Activated T-helper 1 cell treated with anti-CD3 and anti-CD28 coated beads, Interleukin-12 subunit alpha, Interleukin-12 subunit beta, Interleukin-2, Interleukin-4 antibody, amounts not matched to agents 30 ng/mL and 10 ng/mL and 1 ng/mL, durations not matched to agents 14 hours and 24 hours and 36 hours (primary cell): ENCODE measurements at regions of chr11 and their contacts with region 1.

Region 1: GRCh38 chr11:119057000-119057769 is at the start of gene HYOU1:
- DNase-seq: peak; percentile 98
- H3K4me3 Mint-ChIP-seq: peak within 1 kb of the TSS; percentile 97
- H3K27ac Mint-ChIP-seq: peak within 1 kb of the TSS; percentile 99
- H3K4me1 Mint-ChIP-seq: peaks cover 48% of the 10 kb centered on the region
- H3K27me3 Mint-ChIP-seq: no peaks in the 10 kb centered on the region
- total RNA-seq, gene HYOU1: 216 and 219 TPM in 2 replicates

Region 2: DNA sequence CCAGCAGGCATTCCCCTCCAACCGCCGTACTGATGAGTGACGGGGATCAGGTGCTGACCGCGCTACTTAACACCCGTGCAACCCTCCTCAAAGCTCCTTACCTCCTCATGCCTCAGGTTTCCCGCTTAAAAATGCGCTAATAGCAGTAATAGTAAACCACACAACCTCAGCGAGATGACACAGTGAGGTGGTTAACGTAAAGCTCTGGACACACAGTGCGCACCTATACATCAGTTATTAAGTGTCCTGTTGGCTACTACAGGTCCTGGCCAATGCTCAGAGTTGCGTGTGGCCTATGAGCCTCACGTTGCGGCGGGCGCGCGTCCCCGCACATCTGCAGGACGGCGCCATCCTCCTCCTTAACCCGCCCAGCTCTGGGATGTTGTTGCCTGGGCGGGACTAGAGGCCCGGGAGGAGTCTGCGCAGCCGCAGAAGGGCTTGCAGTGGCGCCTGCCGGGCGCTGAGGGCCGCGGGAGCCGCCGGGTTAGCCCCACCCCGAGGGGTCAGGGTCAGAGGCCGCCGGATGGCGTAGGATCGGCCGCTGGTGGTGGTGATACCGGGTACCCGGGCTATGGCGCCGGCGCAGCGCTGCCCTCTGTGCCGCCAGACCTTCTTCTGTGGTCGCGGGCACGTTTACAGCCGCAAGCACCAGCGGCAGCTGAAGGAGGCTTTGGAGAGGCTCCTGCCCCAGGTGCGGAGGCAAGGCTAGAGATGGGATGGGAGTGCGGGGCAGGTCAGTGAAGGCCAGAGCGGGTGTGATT is 59.4 kb before region 1 on chr11 and contains the start of gene CENATAC:
- intact Hi-C with region 1: loop called (anchors 1 kb)
- DNase-seq: peak; percentile 96
- H3K4me3 Mint-ChIP-seq: peak within 1 kb of the TSS; percentile 96
- H3K27ac Mint-ChIP-seq: peak within 1 kb of the TSS; percentile 97
- H3K4me1 Mint-ChIP-seq: peaks cover 27% of the 10 kb centered on the region
- H3K27me3 Mint-ChIP-seq: no peaks in the 10 kb centered on the region
- total RNA-seq, gene CENATAC: 50.1 and 53.6 TPM in 2 replicates

Region 3: DNA sequence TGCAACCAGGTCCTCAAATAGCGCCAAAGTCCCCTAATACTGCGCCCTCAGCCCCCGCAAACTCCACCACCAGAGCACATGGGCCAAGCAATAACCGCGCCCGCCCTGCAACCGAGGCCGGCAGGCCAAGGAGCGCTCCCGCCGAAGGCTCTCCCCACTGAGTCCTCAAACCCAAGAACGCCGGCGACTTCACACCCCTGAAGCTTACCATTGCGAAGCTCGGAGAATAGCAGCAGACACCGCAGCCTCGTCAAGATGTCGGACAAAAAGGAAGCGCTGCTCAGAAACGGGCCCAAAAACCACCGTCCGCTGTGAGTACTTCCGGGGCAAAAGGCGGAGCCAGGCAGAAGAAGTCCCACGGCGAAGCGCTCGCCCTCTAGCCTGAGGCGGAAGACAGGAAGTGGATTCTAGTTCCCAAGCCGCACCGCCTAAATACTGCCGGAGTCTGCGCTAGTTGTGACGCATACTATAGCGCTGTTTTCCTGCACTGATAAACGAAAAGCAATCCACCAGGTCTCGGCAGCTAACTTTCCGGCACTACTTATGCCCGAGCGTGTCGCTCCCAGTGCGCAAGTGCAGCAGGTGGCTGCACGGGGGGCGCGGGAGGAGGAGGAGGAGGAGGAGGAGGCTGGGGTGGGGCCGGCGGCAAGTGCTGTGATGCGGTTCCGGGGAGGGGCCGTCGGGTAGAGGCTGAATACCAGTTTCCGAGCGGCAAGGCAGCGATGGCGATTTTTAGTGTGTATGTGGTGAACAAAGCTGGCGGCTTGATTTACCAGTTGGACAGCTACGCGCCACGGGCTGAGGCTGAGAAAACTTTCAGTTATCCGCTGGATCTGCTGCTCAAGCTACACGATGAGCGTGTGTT is 38.9 kb before region 1 on chr11 and contains the starts of genes RPS25 and TRAPPC4:
- intact Hi-C with region 1: loop called (anchors 1 kb)
- DNase-seq: peak; percentile 92
- H3K4me3 Mint-ChIP-seq: peak within 1 kb of the TSS; percentile 99
- H3K27ac Mint-ChIP-seq: peak within 1 kb of the TSS; percentile 100
- H3K4me1 Mint-ChIP-seq: peaks cover 42% of the 10 kb centered on the region
- H3K27me3 Mint-ChIP-seq: no peaks in the 10 kb centered on the region
- total RNA-seq, gene RPS25: 1,440 and 1,455 TPM in 2 replicates
- total RNA-seq, gene TRAPPC4: 141 and 142 TPM in 2 replicates

Region 4: DNA sequence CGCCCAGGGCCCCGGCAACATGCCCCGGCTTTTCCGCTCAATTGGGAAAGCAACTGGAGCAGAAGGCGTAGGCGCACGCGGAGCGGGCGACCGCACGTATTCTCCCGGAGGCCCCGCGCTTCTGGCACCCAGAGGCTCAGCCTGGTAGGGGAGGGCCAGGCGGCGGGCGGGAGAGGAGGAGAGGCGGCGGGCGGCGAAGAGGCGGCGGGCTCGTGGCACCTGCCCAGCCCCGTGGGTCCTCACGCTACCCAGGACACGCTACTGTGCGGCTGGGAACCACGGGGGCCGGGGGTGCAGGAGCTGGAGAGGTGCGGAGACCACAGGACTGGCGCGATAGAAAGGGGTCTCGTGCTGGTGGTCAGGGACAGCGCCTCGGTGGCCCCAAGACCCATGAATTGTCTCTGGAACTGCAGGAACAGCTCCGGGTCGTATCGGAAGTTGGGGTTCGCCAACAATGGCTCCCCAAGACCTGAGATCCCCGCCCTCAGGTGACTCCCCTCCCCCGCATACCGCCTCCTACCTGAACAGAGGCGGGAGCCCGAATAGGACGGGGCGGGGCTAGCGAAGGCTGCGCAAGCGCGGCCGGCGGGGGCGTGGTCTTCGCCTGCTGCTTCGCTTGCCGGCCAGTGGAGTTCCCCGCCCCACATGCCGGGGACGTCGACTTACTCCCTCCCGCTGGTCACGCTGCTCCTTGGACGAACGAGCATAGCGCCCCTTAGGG is 26.7 kb before region 1 on chr11 and contains the start of gene SLC37A4:
- intact Hi-C with region 1: loop called (anchors 1 kb)
- DNase-seq: peak; percentile 99
- H3K4me3 Mint-ChIP-seq: peak within 1 kb of the TSS; percentile 80
- H3K27ac Mint-ChIP-seq: peak within 1 kb of the TSS; percentile 86
- H3K4me1 Mint-ChIP-seq: peaks cover 15% of the 10 kb centered on the region
- H3K27me3 Mint-ChIP-seq: no peaks in the 10 kb centered on the region
- total RNA-seq, gene SLC37A4: 24.3 and 28.7 TPM in 2 replicates

Region 5: GRCh38 chr11:119084663-119085436 is 27.7 kb after region 1 on chr11 and contains the start of gene HMBS:
- intact Hi-C with region 1: loop called (anchors 1 kb)
- DNase-seq: peak; percentile 89
- H3K4me3 Mint-ChIP-seq: peak within 1 kb of the TSS; percentile 97
- H3K27ac Mint-ChIP-seq: peak within 1 kb of the TSS; percentile 92
- H3K4me1 Mint-ChIP-seq: peaks cover 39% of the 10 kb centered on the region
- H3K27me3 Mint-ChIP-seq: no peaks in the 10 kb centered on the region
- total RNA-seq, gene HMBS: 55.0 and 55.6 TPM in 2 replicates

Region 6: DNA sequence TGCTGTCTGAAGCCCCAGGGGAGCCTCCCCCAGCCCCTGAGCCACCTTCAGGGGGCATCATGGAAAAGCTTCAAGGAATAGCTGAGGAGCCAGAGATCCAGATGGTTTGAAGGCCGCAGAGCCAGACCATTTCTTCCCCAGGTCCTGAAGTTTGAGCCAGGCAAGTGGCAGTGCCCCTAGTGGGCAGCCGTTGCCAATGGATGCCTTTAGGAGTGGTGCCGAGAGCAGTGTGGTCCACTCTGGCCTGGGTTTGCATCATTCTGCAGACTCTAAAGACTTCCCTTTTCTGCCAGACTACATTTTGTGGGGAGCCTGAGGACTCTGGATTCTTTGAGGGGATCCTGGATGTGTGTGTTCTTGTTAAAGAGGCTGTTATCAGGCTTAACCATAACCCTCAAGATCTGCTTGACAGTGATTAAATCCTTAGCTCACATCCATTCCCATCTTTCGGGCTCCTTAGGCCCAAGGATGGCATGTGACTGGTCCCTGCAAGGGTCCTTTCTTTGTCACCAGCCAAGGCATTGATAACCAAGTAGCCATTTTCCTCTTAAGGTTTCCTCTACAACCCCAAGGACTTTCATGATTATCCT is 77.3 kb after region 1 on chr11:
- intact Hi-C with region 1: no loop called
- DNase-seq: no peak
- H3K4me3 Mint-ChIP-seq: no peak overlapping the region
- H3K27ac Mint-ChIP-seq: no peak overlapping the region
- H3K4me1 Mint-ChIP-seq: no peaks in the 10 kb centered on the region
- H3K27me3 Mint-ChIP-seq: peaks cover 7% of the 10 kb centered on the region

Region 7: DNA sequence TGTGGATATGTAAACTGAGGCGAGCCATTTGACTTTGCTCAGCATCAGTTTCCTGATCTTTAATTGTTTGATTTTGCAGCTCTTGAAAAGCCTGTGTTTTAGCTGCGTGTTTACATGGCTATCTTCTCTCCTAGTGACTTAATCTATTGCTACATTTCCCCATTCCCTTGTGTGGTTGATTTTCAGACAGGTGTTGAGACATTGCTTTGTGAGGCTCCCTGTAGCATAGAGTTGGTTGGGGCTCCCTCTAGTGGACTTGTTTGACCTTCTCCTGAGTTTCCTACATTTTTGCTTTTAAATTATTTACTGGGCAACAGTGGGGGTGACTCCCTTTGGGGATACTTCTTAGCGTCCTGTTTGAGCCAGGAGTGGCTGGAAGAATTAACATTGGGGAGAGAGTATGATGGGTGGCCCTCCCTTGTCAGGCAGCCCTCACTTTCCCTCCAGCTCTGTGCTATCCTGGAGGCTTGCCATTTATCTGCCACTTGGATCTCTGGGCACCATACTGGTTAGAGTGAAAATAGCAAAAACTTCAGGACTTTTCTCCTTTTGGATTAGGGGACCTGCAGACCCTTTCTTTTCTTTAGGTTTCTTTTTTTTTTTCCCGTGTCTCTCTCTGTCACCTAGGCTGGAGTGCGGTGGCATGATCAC is 139.8 kb after region 1 on chr11:
- intact Hi-C with region 1: loop called (anchors 2 kb)
- DNase-seq: peak; percentile 60
- H3K4me3 Mint-ChIP-seq: no peak overlapping the region
- H3K27ac Mint-ChIP-seq: no peak overlapping the region
- H3K4me1 Mint-ChIP-seq: peaks cover 9% of the 10 kb centered on the region
- H3K27me3 Mint-ChIP-seq: peaks cover 3% of the 10 kb centered on the region